ENCODE measurements at regions of chr17 and their contacts with region 1.

Region 1: GRCh38 chr17:6413065-6413464 is 21.9 kb downstream of the AIPL1 start:
- DNase-seq: peak; percentile 36
- ATAC-seq: peak; percentile 90
- H3K4me3 ChIP-seq: no peak overlapping the region
- H3K27ac ChIP-seq: no peak overlapping the region
- H3K4me1 ChIP-seq: no peaks in the 10 kb centered on the region
- H3K27me3 ChIP-seq: peaks cover 32% of the 10 kb centered on the region
- CTCF ChIP-seq: peak; percentile 58 to 68 (median 62)
- POLR2A ChIP-seq: no peak
- RAD21 ChIP-seq: peak; percentile 80

Region 2: DNA sequence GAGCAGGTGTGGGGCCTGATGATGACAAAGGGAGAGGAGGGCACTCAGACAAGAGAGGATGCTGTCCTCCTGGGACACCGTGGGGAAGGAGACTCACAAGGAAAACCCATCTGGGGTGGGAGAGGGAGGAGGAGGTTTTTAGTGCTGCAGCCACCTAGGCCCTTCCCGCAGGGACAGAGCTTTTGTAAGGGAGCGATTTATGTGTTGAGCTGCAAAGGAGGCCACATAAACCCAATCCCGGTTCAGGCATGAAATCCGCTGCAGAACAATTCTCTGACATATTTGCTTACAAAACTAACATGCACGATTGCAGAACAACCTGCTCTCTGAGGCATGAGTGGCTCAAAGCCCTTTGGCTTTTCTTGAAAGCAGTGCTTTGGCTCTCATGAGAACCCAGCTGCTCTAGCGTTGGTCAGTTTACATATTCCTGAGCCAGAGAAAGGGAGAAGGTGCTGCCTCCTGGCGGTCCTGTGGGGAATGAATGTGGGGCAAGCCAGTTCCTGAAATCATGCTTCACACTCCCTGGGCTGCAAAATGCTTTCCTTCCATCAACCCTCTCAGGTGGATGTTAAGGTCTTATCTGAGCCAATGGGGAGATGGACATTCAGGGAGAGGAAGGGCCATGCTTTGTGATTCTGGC is 706.4 kb before region 1 on chr17:
- CTCF ChIA-PET with region 1: no interaction called
- POLR2A ChIA-PET with region 1: no interaction called
- RAD21 ChIA-PET with region 1: no interaction called
- intact Hi-C with region 1: loop called (anchors 5 kb)
- DNase-seq: peak; percentile 33
- ATAC-seq: peak; percentile 92
- H3K4me3 ChIP-seq: no peak overlapping the region
- H3K27ac ChIP-seq: no peak overlapping the region
- H3K4me1 ChIP-seq: no peaks in the 10 kb centered on the region
- H3K27me3 ChIP-seq: peaks cover 33% of the 10 kb centered on the region
- CTCF ChIP-seq: peak; percentile 51 to 90 (median 90); a peak in 5 of 6 replicates
- POLR2A ChIP-seq: no peak
- RAD21 ChIP-seq: peak; percentile 66

Region 3: DNA sequence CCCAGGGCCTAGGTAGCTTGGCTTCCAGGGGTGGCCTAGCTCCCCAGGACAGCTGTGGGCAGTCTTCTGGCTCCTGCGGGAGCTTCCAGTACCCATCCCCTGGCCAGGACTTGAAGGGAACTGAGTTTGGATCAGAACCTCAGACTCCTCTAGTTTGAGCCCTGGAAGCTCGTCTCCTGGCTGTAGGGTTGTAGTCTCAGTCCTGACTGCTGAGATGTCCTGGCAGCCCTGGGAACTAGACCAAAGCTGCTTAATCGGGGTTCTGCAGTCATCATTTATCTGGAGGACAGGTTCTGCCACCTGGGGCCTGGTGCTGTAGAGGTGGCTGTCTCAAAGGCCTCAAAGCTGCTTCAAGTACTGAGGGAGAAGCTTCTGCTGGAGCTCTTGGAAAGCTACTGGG is 179.2 kb before region 1 on chr17:
- CTCF ChIA-PET with region 1: no interaction called
- POLR2A ChIA-PET with region 1: no interaction called
- RAD21 ChIA-PET with region 1: no interaction called
- intact Hi-C with region 1: loop called (anchors 2 kb)
- DNase-seq: no peak
- ATAC-seq: no peak
- H3K4me3 ChIP-seq: no peak overlapping the region
- H3K27ac ChIP-seq: no peak overlapping the region
- H3K4me1 ChIP-seq: peaks cover 6 to 7% of the 10 kb centered on the region in 2 experiments; a peak in 3 of 4 replicates
- H3K27me3 ChIP-seq: peaks cover 44% of the 10 kb centered on the region
- CTCF ChIP-seq: no peak
- POLR2A ChIP-seq: no peak
- RAD21 ChIP-seq: no peak

Region 4: GRCh38 chr17:6279659-6280058 is 133.4 kb before region 1 on chr17:
- CTCF ChIA-PET with region 1: no interaction called
- POLR2A ChIA-PET with region 1: no interaction called
- RAD21 ChIA-PET with region 1: no interaction called
- intact Hi-C with region 1: loop called (anchors 1 kb)
- DNase-seq: peak; percentile 56
- ATAC-seq: peak; percentile 88
- H3K4me3 ChIP-seq: no peak overlapping the region
- H3K27ac ChIP-seq: no peak overlapping the region
- H3K4me1 ChIP-seq: no peaks in the 10 kb centered on the region
- H3K27me3 ChIP-seq: 0 out of 2 replicates have a peak, but pooled peaks cover 20% of the 10 kb centered on the region
- CTCF ChIP-seq: peak; percentile 60 to 98 (median 69)
- POLR2A ChIP-seq: no peak
- RAD21 ChIP-seq: peak; percentile 88

Region 5: DNA sequence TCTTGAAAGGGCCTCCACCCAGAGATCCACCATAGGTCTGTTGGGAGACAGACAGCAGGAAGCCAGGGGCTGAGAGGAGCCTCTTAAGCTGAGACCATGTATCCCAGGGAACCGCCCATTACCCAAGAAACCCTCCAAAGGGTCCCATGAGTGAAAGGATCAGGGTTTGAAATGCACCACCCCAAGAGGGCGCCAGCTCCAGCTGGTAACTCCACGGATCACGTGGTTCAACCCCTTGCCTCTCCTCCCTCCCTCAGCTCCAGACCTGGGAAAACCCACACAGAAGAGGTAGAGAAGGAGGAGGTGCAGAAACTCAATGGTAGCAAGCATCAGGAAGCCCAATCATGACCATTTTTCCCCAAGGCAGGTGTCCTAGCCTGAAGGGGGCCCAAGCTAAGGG is 126.8 kb before region 1 on chr17:
- CTCF ChIA-PET with region 1: interaction called, 22 read pairs
- POLR2A ChIA-PET with region 1: interaction called, 5 read pairs
- RAD21 ChIA-PET with region 1: interaction called, 4 to 7 read pairs
- intact Hi-C with region 1: loop called (anchors 2 kb)
- DNase-seq: peak; percentile 40
- ATAC-seq: peak; percentile 88
- H3K4me3 ChIP-seq: no peak overlapping the region
- H3K27ac ChIP-seq: no peak overlapping the region
- H3K4me1 ChIP-seq: peaks cover 0 to 3% of the 10 kb centered on the region in 2 experiments; a peak in 2 of 4 replicates
- H3K27me3 ChIP-seq: peaks cover 38% of the 10 kb centered on the region
- CTCF ChIP-seq: peak; percentile 46 to 62 (median 58); a peak in 5 of 6 replicates
- POLR2A ChIP-seq: no peak
- RAD21 ChIP-seq: peak; percentile 61